GM12878 (cell line): ENCODE measurements at regions of chr1 and their contacts with region 1.

Region 1: GRCh38 chr1:36099681-36100341 is 11.1 kb downstream of the ADPRS start:
- DNase-seq: no peak
- ATAC-seq: peak; percentile 96
- H3K4me3 ChIP-seq: no peak overlapping the region
- H3K27ac ChIP-seq: no peak overlapping the region
- H3K4me1 ChIP-seq: no peaks in the 10 kb centered on the region
- H3K27me3 ChIP-seq: no peaks in the 10 kb centered on the region
- CTCF ChIP-seq: peak; percentile 82 to 88 (median 86)
- EP300 ChIP-seq: no peak
- POLR2A ChIP-seq: no peak
- RAD21 ChIP-seq: peak; percentile 95

Region 2: DNA sequence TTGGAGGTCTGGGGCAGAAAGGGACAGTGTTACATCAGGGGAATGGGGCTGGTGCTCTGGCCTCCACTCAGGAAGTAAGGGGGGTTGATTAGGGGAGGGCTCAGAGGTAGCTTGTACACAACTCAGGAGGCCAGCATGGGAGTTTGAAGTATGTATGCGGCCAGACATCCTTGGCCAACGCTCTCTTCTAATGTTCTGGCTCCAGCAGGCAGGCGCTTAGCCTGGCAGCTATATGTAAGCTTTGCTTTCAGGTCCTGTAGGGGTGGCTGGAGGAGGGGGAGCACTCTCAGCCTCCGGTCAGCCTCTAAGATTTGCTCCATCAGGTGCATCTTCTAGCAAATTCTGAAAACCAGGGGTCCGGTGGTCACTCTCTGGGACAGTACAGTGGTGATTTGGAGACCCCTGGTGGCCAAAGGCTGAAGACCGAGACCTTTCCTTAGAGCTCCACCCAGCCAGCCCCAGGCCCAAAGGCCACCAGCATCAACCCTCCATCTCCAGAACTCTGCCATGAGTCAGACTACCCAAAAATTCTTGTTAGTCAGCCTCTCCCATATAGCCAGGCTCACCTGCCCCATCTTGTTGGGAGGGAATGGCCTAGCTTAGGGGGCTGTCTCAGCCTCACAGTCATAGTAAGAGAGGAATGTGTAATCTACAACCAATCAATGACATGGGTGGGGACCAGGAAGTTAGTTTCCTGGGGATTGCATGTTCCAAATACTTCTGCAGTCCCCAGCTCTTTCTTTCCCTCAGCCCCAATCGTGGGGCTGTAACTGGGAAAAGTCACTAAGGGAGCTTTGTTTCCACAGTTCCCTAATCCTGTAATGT is 34.9 kb after region 1 on chr1:
- CTCF ChIA-PET with region 1: interaction called, 56 read pairs
- POLR2A ChIA-PET with region 1: no interaction called
- RAD21 ChIA-PET with region 1: interaction called, 12 read pairs
- SMC1A ChIA-PET with region 1: interaction called, 16 read pairs
- in situ Hi-C with region 1: no loop called
- intact Hi-C with region 1: loop called (anchors 1 kb)
- DNase-seq: no peak
- ATAC-seq: peak; percentile 96
- H3K4me3 ChIP-seq: no peak overlapping the region
- H3K27ac ChIP-seq: no peak overlapping the region
- H3K4me1 ChIP-seq: no peaks in the 10 kb centered on the region
- H3K27me3 ChIP-seq: no peaks in the 10 kb centered on the region
- CTCF ChIP-seq: peak; percentile 62 to 70 (median 69)
- EP300 ChIP-seq: no peak
- POLR2A ChIP-seq: no peak
- RAD21 ChIP-seq: peak; percentile 73